ENCODE measurements at regions of chr5 and their contacts with region 1.

Region 1: DNA sequence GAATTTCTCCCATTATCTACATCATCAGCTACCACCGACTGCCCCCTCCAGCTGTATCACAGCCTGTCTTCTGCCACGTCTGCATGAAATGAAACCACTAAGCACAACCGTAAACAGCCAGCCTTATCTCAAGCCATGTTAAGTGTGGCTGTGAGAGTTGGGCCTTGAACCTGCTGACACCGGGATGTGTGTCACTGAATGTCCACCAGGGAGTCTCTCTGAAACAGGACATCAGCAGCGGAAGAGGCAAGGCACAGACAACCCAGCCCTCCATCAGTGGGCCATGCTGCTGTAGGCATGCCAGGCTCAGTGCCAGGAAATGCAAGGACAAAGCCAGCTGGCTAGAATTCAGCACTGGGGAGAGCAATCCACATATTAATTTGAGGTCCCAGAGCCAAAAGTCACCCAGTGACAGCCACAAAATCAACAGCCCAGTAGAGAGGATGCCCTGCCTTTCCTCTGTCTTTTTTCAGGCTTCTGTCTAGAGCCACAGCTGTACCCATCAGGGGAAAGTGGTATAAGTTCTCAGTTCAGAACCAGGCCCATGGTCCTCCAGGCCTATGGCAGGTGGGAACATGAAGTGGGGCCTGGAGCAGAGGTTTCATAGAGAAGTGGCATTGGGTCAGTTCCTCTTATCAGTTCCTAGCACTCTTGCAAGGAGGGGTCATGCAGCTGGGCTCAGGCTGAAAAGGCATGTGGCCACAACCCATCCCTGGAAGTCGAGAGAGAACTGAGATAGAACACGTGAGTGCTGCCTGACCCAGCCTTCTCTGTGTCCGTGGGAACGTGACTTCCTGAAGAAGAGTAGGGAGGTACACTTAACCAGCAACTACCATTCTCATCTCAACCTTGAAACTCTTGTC is 199.4 kb downstream of the ESM1 start:
- DNase-seq: peak; percentile 47
- ATAC-seq: peak; percentile 90
- H3K4me3 Mint-ChIP-seq: no peak overlapping the region
- H3K27ac Mint-ChIP-seq: peak overlapping the region; percentile 88
- H3K4me1 Mint-ChIP-seq: peaks cover 32% of the 10 kb centered on the region
- H3K27me3 Mint-ChIP-seq: no peaks in the 10 kb centered on the region
- CTCF ChIP-seq: no peak

Region 2: GRCh38 chr5:54610197-54610944 is 175.6 kb before region 1 on chr5:
- CTCF ChIA-PET with region 1: no interaction called
- POLR2A ChIA-PET with region 1: no interaction called
- intact Hi-C with region 1: loop called (anchors 1 kb)
- DNase-seq: no peak
- ATAC-seq: peak; percentile 94
- H3K4me3 Mint-ChIP-seq: peak overlapping the region; percentile 55
- H3K27ac Mint-ChIP-seq: peak overlapping the region; percentile 71
- H3K4me1 Mint-ChIP-seq: peaks cover 50% of the 10 kb centered on the region
- H3K27me3 Mint-ChIP-seq: no peaks in the 10 kb centered on the region
- CTCF ChIP-seq: no peak

Region 3: GRCh38 chr5:54799645-54800044 is 13.7 kb after region 1 on chr5:
- CTCF ChIA-PET with region 1: no interaction called
- POLR2A ChIA-PET with region 1: interaction called, 4 read pairs
- intact Hi-C with region 1: loop called (anchors 1 kb)
- DNase-seq: no peak
- ATAC-seq: peak; percentile 94
- H3K4me3 Mint-ChIP-seq: peak overlapping the region; percentile 11
- H3K27ac Mint-ChIP-seq: peak overlapping the region; percentile 7
- H3K4me1 Mint-ChIP-seq: peaks cover 30% of the 10 kb centered on the region
- H3K27me3 Mint-ChIP-seq: no peaks in the 10 kb centered on the region
- CTCF ChIP-seq: no peak